ENCODE measurements at regions of chrX and their contacts with region 1.

Region 1: DNA sequence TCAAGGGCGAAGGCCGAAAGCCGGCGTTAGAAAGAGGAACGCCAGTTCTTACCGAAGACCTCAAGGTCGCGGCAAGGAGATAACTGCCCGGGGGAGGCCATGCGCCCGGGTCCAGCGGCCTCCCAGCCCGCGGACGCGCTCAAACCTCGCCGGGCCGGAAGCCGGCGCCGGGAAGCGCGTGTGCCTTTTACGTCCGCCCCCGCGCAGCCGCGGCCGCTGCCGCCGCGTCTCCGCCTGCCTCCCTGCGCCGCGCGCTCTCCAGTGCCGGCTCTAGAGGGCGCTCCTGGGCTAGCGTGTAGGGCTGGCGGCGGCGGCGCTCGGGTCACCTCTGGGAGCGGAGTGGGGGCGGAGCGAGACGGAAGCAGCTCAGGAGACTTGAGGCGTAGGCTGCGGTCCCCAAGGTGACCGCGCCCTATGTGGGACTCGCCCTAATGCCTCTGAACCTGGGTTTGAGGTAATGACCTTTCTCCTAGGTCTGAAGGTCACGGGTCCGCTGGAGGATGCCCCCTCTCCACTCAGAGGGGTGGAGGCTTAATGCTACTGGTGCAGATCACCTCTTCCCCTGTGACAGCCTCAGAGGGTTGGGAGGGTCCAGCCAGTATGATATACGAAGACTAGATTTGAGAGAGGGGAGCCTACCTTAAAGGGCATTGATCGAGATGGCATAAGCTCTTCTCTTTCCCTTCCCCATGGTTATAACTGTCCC is 839 bp downstream of the SLC25A5 start:
- DNase-seq: no peak
- ATAC-seq: peak; percentile 78
- H3K4me3 ChIP-seq: peak overlapping the region; percentile 92 to 96
- H3K27ac ChIP-seq: peak overlapping the region; percentile 90
- H3K4me1 ChIP-seq: peaks cover 17% of the 10 kb centered on the region
- H3K27me3 ChIP-seq: no peaks in the 10 kb centered on the region
- CTCF ChIP-seq: peak; percentile 95

Region 2: DNA sequence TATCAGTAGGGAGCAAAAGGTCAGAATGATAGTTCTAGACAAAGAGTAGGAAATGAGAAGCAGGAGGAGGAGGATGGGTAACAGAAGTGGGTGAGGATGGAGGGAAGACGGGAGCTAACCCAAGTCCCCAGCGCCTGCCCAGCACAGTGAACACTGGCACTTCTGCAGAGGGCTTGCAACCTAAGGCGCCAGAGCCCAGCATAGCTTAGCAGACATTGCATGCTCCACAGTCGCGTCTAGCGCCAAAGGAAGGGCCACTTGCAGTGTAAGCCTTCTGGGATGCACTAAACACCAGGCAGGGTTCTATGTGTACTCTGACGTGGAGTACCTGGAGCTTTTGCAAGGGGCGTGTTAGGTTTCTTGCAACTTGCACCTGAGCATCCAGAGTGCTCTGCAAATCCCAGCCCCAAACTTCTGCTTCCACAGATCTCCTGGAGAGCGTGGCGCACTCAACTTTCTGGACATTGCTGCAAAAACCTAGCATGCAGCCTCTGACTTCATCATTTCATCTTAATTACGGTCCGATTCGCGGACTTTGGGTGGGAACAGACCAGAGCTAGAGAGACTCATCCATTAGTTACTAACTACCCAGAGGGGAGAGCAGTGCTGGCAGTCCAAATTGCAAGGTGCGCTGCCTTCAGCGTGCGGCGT is 520.9 kb after region 1 on chrX:
- CTCF ChIA-PET with region 1: interaction called, 11 read pairs
- POLR2A ChIA-PET with region 1: no interaction called
- in situ Hi-C with region 1: no loop called
- intact Hi-C with region 1: no loop called
- DNase-seq: no peak
- ATAC-seq: peak; percentile 84
- H3K4me3 ChIP-seq: peak overlapping the region; percentile 45 to 53
- H3K27ac ChIP-seq: no peak overlapping the region
- H3K4me1 ChIP-seq: peaks cover 6% of the 10 kb centered on the region; the same call in 1 of the 2 replicates
- H3K27me3 ChIP-seq: peaks cover 4% of the 10 kb centered on the region
- CTCF ChIP-seq: no peak